ENCODE measurements at regions of chr6 and their contacts with region 1.

Region 1: DNA sequence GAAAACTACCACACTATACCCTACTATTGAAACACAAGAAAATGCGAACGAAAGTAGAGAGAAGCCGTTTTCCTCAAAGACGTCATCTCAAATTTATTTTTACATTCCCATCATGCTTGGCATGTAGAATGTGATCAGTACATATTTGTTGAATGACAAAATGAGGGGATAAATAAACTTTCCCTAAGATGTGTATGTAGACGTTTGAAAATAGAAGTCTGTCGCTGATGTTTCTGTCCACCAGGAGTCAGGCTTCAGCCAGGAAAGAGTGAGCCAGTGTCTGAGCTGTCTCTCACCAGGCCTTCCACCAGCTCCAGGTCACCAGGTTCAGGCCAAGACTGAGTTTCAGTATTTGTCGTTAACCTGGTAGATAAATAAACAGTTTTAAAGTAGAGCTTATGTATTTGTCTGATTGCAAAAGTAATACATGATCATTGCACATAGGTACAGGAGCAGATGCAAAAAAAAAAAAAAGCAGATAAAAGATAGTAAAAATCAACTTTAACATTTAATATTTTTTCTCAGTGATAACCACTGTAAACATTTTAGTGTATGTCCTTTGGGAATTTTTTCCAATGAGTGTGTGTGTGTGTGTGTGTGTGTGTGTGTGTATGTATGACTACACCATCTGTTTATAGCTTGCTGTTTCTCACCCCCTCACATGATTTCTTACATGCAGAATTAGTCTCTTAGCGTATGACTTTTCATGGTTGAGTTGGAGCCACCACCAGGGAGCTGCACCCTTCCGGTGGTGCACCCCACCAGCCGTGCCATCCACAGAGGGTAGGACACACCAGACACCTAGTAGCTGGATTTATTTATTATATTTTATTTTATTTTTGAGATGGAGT is 26.2 kb downstream of the WRNIP1 start:
- DNase-seq: peak; percentile 97
- ATAC-seq: peak; percentile 84
- H3K4me3 ChIP-seq: peak overlapping the region; percentile 20; the same call in 1 of the 2 replicates
- H3K27ac ChIP-seq: peak overlapping the region; percentile 91
- H3K4me1 ChIP-seq: peaks cover 18% of the 10 kb centered on the region
- H3K27me3 ChIP-seq: no peaks in the 10 kb centered on the region
- CTCF ChIP-seq: peak; percentile 96
- POLR2A ChIP-seq: peak; percentile 76; the same call in 1 of the 2 replicates
- RAD21 ChIP-seq: peak; percentile 97

Region 2: GRCh38 chr6:2579241-2579761 is 212.0 kb before region 1 on chr6:
- CTCF ChIA-PET with region 1: no interaction called
- POLR2A ChIA-PET with region 1: no interaction called
- dilution Hi-C with region 1: no loop called
- in situ Hi-C with region 1: no loop called
- intact Hi-C with region 1: no loop called
- DNase-seq: peak; percentile 46
- ATAC-seq: peak; percentile 79
- H3K4me3 ChIP-seq: no peak overlapping the region
- H3K27ac ChIP-seq: peak overlapping the region; percentile 46
- H3K4me1 ChIP-seq: peaks cover 10% of the 10 kb centered on the region
- H3K27me3 ChIP-seq: no peaks in the 10 kb centered on the region
- CTCF ChIP-seq: no peak
- POLR2A ChIP-seq: no peak
- RAD21 ChIP-seq: no peak

Region 3: DNA sequence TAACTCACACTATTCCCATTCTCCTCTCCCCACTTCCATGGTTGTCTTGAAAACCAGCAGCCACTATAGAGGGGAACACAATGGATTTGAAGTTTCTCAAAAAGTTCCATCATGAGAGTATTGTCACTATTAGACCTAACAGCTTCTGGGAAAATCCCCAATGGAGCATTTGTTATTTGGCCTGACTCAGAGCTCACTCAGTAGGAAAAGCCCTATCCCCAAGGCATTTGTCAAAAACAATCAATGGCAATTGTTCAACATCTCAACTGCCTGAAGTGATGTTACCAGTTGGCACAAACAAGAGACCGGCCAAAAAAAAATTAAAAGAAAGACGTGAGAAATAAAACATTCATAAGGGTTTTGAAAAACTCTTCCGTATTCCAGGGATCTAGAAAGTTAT is 139.4 kb before region 1 on chr6:
- CTCF ChIA-PET with region 1: no interaction called
- POLR2A ChIA-PET with region 1: no interaction called
- dilution Hi-C with region 1: no loop called
- in situ Hi-C with region 1: no loop called
- intact Hi-C with region 1: no loop called
- DNase-seq: no peak
- ATAC-seq: no peak
- H3K4me3 ChIP-seq: no peak overlapping the region
- H3K27ac ChIP-seq: no peak overlapping the region
- H3K4me1 ChIP-seq: no peaks in the 10 kb centered on the region
- H3K27me3 ChIP-seq: peaks cover 2% of the 10 kb centered on the region
- CTCF ChIP-seq: no peak
- POLR2A ChIP-seq: no peak
- RAD21 ChIP-seq: no peak

Region 4: GRCh38 chr6:2738373-2738979 is 52.9 kb before region 1 on chr6:
- CTCF ChIA-PET with region 1: interaction called, 5 read pairs
- POLR2A ChIA-PET with region 1: no interaction called
- dilution Hi-C with region 1: no loop called
- in situ Hi-C with region 1: no loop called
- intact Hi-C with region 1: loop called (anchors 2 kb)
- DNase-seq: peak; percentile 80
- ATAC-seq: peak; percentile 78
- H3K4me3 ChIP-seq: no peak overlapping the region
- H3K27ac ChIP-seq: no peak overlapping the region
- H3K4me1 ChIP-seq: peaks cover 11% of the 10 kb centered on the region; the same call in 1 of the 2 replicates
- H3K27me3 ChIP-seq: no peaks in the 10 kb centered on the region
- CTCF ChIP-seq: peak; percentile 92
- POLR2A ChIP-seq: no peak
- RAD21 ChIP-seq: peak; percentile 94

Region 5: GRCh38 chr6:2841264-2842138 is 50.2 kb after region 1 on chr6 and contains the start of gene SERPINB1:
- CTCF ChIA-PET with region 1: interaction called, 29 read pairs
- POLR2A ChIA-PET with region 1: interaction called, 5 read pairs
- dilution Hi-C with region 1: no loop called
- in situ Hi-C with region 1: loop called (anchors 5 kb)
- intact Hi-C with region 1: loop called (anchors 1 kb)
- DNase-seq: peak; percentile 97
- ATAC-seq: peak; percentile 92
- H3K4me3 ChIP-seq: peak within 1 kb of the TSS; percentile 34
- H3K27ac ChIP-seq: peak within 1 kb of the TSS; percentile 80
- H3K4me1 ChIP-seq: peaks cover 19% of the 10 kb centered on the region
- H3K27me3 ChIP-seq: no peaks in the 10 kb centered on the region
- CTCF ChIP-seq: no peak
- POLR2A ChIP-seq: peak; percentile 79
- RAD21 ChIP-seq: peak; percentile 16; the same call in 1 of the 2 replicates
- total RNA-seq, gene SERPINB1: 6.1 TPM in 2 replicates

Region 6: GRCh38 chr6:2853761-2854395 is 62.5 kb after region 1 on chr6:
- CTCF ChIA-PET with region 1: interaction called, 10 read pairs
- POLR2A ChIA-PET with region 1: no interaction called
- dilution Hi-C with region 1: no loop called
- in situ Hi-C with region 1: no loop called
- intact Hi-C with region 1: loop called (anchors 1 kb)
- DNase-seq: peak; percentile 89
- ATAC-seq: peak; percentile 58
- H3K4me3 ChIP-seq: peak overlapping the region; percentile 58
- H3K27ac ChIP-seq: peak overlapping the region; percentile 97
- H3K4me1 ChIP-seq: peaks cover 35% of the 10 kb centered on the region
- H3K27me3 ChIP-seq: no peaks in the 10 kb centered on the region
- CTCF ChIP-seq: peak; percentile 60
- POLR2A ChIP-seq: peak; percentile 55; the same call in 1 of the 2 replicates
- RAD21 ChIP-seq: peak; percentile 58

Region 7: DNA sequence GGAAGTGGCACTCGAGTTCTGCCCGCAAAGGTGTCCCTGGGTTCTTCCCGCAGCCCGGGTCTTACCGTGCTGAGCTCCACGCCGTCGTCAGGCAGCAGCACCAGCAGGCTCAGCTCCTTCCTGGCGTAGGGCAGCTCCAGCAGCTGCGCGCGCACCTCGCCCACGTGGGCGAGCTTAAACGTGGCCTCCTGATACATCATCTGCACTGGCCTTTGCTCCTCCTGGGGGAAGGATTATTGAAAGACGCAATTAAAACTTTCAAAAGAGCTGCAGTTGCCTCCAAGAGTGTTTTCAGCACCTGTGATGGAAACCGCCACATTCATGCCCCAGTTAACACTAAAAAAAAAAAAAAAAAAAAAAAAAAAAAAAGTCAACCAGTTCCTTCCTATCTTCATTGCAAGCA is 100.4 kb after region 1 on chr6:
- CTCF ChIA-PET with region 1: no interaction called
- POLR2A ChIA-PET with region 1: no interaction called
- dilution Hi-C with region 1: no loop called
- in situ Hi-C with region 1: no loop called
- intact Hi-C with region 1: no loop called
- DNase-seq: no peak
- ATAC-seq: no peak
- H3K4me3 ChIP-seq: no peak overlapping the region
- H3K27ac ChIP-seq: no peak overlapping the region
- H3K4me1 ChIP-seq: no peaks in the 10 kb centered on the region
- H3K27me3 ChIP-seq: no peaks in the 10 kb centered on the region
- CTCF ChIP-seq: no peak
- POLR2A ChIP-seq: no peak
- RAD21 ChIP-seq: no peak

Region 8: DNA sequence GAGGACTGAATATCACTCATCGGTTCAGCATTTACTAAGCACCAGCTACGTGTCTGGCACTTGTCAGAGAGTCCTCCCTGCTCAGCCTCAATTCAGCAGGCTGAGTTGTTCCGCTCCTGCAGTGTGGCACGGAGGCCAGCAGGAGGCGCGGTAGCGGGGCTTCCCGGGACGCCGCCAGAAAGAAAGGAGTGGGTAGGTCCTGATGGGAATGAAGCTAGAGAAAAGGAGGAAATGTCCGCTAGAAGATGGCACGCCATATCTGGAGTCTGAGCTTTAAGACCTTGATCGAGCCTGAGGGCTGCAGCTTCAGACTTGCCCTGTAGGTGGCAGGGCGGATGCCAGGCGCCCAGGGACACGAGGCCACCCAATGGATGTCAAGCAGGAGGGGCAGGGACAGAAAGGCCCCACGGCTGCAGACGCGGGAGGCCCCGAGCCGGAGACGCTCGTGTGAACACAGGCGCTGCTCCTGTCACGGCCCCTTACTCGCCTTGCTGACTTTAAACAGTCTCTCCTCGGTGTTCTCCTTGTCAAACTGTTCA is 161.3 kb after region 1 on chr6:
- CTCF ChIA-PET with region 1: interaction called, 10 read pairs
- POLR2A ChIA-PET with region 1: no interaction called
- dilution Hi-C with region 1: no loop called
- in situ Hi-C with region 1: no loop called
- intact Hi-C with region 1: loop called (anchors 1 kb)
- DNase-seq: peak; percentile 91
- ATAC-seq: peak; percentile 99
- H3K4me3 ChIP-seq: no peak overlapping the region
- H3K27ac ChIP-seq: peak overlapping the region; percentile 25
- H3K4me1 ChIP-seq: peaks cover 3% of the 10 kb centered on the region; the same call in 1 of the 2 replicates
- H3K27me3 ChIP-seq: no peaks in the 10 kb centered on the region
- CTCF ChIP-seq: peak; percentile 94
- POLR2A ChIP-seq: no peak
- RAD21 ChIP-seq: peak; percentile 80

Measured in IMR-90 (cell line).